Activated naive CD4-positive, alpha-beta T cell treated with anti-CD3 and anti-CD28 coated beads, Interleukin-2, amount 10 ng/mL, durations not matched to agents 7 days and 5 days (primary cell): ENCODE measurements at regions of chr3 and their contacts with region 1.

Region 1: DNA sequence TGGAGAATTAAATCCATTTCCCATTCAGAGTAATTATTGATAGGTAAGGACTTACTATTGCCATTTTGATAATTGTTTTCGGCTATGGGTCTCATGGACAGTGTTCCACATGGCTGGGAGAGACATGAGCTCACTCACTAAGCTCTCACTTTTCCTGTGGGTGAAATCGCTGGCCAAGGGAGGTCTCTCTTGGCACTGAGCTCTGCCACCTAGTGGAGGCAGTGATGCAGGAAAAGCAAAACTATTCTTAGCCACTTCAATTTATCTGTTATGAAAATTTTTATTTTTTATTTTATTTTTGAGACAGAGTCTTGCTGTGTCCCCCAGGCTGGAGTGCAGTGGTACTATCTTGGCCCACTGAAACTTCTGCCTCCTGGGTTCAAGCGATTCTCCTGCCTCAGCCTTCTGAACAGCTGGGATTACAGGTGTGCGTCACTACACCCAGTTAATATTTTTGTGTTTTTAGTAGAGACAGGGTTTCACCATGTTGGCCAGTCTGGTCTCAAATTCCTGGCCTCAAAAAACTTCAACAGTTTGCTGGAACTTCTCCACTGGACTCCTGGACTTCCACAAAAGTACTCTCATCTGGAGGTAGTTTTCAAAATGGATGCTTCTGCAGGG is 4.7 kb upstream of the RNF13 start:
- DNase-seq: peak; percentile 59
- H3K4me3 Mint-ChIP-seq: no peak overlapping the region
- H3K27ac Mint-ChIP-seq: no peak overlapping the region
- H3K4me1 Mint-ChIP-seq: peaks cover 12% of the 10 kb centered on the region
- H3K27me3 Mint-ChIP-seq: peaks cover 24% of the 10 kb centered on the region

Region 2: GRCh38 chr3:149536429-149536828 is 271.9 kb before region 1 on chr3:
- CTCF ChIA-PET with region 1: interaction called, 11 read pairs
- DNase-seq: no peak
- H3K4me3 Mint-ChIP-seq: no peak overlapping the region
- H3K27ac Mint-ChIP-seq: no peak overlapping the region
- H3K4me1 Mint-ChIP-seq: peaks cover 4% of the 10 kb centered on the region
- H3K27me3 Mint-ChIP-seq: peaks cover 18% of the 10 kb centered on the region

Region 3: DNA sequence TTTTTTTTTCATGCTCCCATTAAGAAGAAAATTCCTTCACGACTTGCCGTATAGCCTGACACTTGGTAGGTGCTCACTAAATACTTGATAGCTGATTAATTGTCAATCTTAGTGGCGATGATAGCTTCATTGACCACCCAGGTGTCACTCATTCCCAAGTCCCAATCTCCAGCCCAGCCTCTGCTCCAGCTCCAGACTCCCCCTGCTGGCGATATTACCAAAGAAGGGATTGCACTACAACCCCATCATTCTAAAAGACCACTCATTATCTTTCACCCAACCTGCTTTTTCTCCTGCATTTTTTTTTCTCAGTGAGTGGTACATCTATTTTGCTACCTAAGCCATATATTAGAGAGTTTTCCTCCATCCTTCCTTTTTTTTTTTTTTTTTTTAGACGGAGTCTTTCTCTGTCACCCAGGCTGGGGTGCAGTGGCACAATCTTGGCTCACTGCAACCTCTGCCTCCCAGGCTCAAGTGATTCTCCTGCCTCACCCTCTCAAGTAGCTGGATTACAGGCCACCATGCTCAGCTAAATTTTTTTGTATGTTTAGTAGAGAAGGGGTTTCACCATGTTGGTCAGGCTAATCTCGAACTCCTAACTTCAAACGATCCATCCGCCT is 36.6 kb before region 1 on chr3:
- CTCF ChIA-PET with region 1: interaction called, 21 read pairs
- DNase-seq: peak; percentile 36
- H3K4me3 Mint-ChIP-seq: no peak overlapping the region
- H3K27ac Mint-ChIP-seq: no peak overlapping the region
- H3K4me1 Mint-ChIP-seq: no peaks in the 10 kb centered on the region
- H3K27me3 Mint-ChIP-seq: peaks cover 13% of the 10 kb centered on the region

Region 4: GRCh38 chr3:149820180-149820579 is 11.9 kb after region 1 on chr3:
- CTCF ChIA-PET with region 1: interaction called, 18 read pairs
- DNase-seq: no peak
- H3K4me3 Mint-ChIP-seq: no peak overlapping the region
- H3K27ac Mint-ChIP-seq: no peak overlapping the region
- H3K4me1 Mint-ChIP-seq: peaks cover 37% of the 10 kb centered on the region
- H3K27me3 Mint-ChIP-seq: no peaks in the 10 kb centered on the region